ENCODE measurements at regions of chr3 and their contacts with region 1.

Region 1: DNA sequence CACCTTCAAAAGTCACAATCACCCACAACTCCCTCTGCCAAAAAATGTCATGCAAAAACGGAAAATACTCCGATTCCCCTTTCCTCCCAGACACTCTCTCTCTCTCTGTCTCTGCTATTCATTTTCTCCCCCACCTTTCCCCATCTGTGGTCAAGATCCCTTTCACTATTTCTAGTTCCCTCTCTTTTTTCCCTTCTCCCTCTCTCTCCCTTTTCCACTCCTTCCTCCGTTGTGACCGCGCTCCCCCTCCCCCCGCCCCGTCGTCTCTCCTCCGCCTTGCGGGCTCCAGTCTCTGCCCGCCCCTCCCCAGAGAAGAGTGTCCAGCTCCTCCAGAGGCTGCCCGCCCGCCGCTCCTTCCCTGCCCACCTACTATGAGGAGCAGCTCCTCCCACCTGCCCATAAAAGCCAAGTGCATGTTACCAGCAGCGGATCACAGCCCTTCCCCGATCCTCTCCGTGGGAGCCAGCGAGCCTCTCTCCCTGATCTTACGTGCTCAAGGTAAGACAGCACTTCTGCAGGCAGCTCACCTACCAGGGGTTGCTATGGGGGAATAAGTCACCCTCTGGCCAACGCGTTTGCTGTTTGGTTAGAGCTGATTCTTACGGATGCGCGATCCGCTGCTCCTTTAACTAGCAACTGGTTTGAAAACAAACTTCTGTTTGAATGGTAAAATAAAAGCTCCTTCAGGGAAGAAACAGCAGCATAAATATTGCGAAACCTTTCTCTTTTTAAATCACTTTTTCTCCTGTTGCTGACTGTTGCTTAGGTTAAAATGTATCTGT is at the start of gene COL8A1:
- DNase-seq: peak; percentile 76
- ATAC-seq: peak; percentile 63
- H3K4me3 ChIP-seq: peak within 1 kb of the TSS; percentile 72
- H3K27ac ChIP-seq: peak within 1 kb of the TSS; percentile 79
- H3K4me1 ChIP-seq: peaks cover 36% of the 10 kb centered on the region
- H3K27me3 ChIP-seq: no peaks in the 10 kb centered on the region
- CTCF ChIP-seq: no peak
- total RNA-seq, gene COL8A1: 2.4 and 3.8 TPM in 2 replicates

Region 2: DNA sequence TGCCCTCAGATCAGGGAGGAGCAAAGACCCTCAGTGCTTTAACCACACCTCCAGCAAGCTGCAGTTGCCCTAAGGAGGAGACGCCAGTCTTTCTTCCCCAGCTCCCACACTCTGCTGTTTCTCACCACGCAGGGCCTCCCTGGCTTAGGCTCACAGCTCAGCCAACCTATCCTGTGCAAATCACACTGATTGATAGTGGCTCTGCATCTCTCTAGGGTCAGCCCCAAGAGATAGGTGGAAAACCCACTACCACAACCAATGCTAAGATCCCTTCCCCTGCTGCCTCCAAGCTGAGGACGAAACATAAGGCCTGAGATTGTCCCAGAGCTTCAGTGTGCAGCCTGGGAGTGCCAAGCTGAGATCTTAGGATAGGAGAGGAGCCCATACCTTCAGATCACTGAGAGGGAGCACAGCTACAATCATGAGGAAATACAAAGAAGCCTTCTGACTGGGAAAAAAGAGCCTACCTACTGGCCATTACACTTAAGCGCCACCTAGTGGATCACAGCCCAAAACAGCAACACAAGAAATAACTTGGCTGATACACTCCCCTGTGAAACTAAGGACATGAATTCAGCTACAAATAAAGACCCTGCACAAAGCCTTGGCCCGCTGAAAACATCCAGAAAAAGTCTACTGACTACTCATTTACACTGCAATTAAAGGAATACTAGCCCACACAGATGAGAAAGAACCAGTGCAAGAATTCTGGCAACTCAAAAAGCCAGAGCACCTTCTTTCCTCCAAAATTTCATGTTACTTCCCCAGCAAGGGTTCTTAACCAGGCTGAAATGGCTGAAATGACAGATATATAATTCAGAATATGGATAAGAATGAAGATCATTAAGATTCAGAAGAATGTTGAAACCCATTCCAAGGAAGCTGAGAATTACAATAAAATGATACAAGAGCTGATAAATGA is 465.4 kb before region 1 on chr3:
- CTCF ChIA-PET with region 1: no interaction called
- POLR2A ChIA-PET with region 1: no interaction called
- intact Hi-C with region 1: loop called (anchors 10 kb)
- DNase-seq: peak; percentile 84
- ATAC-seq: peak; percentile 79
- H3K4me3 ChIP-seq: no peak overlapping the region
- H3K27ac ChIP-seq: no peak overlapping the region
- H3K4me1 ChIP-seq: no peaks in the 10 kb centered on the region
- H3K27me3 ChIP-seq: no peaks in the 10 kb centered on the region
- CTCF ChIP-seq: peak; percentile 94

Region 3: GRCh38 chr3:99499235-99500158 is 138.9 kb before region 1 on chr3:
- CTCF ChIA-PET with region 1: no interaction called
- POLR2A ChIA-PET with region 1: interaction called, 3 read pairs
- intact Hi-C with region 1: loop called (anchors 2 kb)
- DNase-seq: peak; percentile 77
- ATAC-seq: peak; percentile 81
- H3K4me3 ChIP-seq: no peak overlapping the region
- H3K27ac ChIP-seq: no peak overlapping the region
- H3K4me1 ChIP-seq: peaks cover 18% of the 10 kb centered on the region
- H3K27me3 ChIP-seq: no peaks in the 10 kb centered on the region
- CTCF ChIP-seq: peak; percentile 94

Region 4: GRCh38 chr3:99551520-99551919 is 86.8 kb before region 1 on chr3:
- CTCF ChIA-PET with region 1: no interaction called
- POLR2A ChIA-PET with region 1: no interaction called
- intact Hi-C with region 1: loop called (anchors 2 kb)
- DNase-seq: no peak
- ATAC-seq: peak; percentile 58; the same call in 1 of the 2 replicates
- H3K4me3 ChIP-seq: no peak overlapping the region
- H3K27ac ChIP-seq: no peak overlapping the region
- H3K4me1 ChIP-seq: peaks cover under 1% of the 10 kb centered on the region; the same call in 1 of the 2 replicates
- H3K27me3 ChIP-seq: no peaks in the 10 kb centered on the region
- CTCF ChIP-seq: peak; percentile 61

Region 5: DNA sequence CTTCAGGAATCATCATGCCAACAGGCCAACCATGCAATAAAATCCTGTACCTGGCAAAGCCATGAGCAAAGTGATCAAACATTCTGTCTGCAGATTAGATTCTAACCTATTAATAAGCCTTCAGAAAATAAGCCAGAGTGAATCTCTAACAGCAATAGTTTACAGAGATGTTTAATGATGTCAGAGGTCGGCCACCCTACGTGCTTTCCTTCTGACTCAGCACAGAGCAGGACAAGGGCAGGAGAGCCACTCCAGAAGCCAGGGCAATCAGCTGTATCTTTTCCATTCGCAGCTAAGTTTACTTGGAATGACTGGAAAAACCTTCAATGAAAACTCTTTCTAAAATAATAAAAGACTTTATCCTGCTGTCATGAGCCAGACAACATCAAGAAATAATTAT is 13.2 kb after region 1 on chr3:
- CTCF ChIA-PET with region 1: interaction called, 6 read pairs
- POLR2A ChIA-PET with region 1: interaction called, 16 read pairs
- intact Hi-C with region 1: no loop called
- DNase-seq: peak; percentile 82
- ATAC-seq: peak; percentile 68
- H3K4me3 ChIP-seq: no peak overlapping the region
- H3K27ac ChIP-seq: peak overlapping the region; percentile 21
- H3K4me1 ChIP-seq: peaks cover 48% of the 10 kb centered on the region
- H3K27me3 ChIP-seq: no peaks in the 10 kb centered on the region
- CTCF ChIP-seq: no peak

Region 6: DNA sequence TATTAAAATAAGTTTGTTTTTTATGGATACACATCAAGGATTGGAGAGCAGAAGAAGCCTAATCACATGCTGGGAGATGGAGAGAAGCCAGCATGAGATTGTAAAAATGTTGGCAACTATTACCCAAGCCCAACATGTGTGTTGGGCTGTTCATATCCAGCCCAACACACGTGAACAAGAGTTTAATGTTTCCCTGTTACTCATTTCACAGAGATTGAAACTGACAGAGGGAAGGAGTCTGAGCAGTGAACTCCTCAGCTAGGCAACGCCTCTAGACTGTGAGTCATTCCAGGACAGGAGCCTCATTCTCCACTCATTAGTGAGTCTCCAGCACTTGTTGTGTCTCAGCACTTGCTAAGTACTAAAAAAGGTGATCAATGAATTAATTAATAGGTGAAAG is 136.1 kb after region 1 on chr3:
- CTCF ChIA-PET with region 1: no interaction called
- POLR2A ChIA-PET with region 1: interaction called, 10 read pairs
- intact Hi-C with region 1: no loop called
- DNase-seq: peak; percentile 72
- ATAC-seq: peak; percentile 86
- H3K4me3 ChIP-seq: no peak overlapping the region
- H3K27ac ChIP-seq: no peak overlapping the region
- H3K4me1 ChIP-seq: peaks cover 24% of the 10 kb centered on the region
- H3K27me3 ChIP-seq: no peaks in the 10 kb centered on the region
- CTCF ChIP-seq: no peak

Region 7: DNA sequence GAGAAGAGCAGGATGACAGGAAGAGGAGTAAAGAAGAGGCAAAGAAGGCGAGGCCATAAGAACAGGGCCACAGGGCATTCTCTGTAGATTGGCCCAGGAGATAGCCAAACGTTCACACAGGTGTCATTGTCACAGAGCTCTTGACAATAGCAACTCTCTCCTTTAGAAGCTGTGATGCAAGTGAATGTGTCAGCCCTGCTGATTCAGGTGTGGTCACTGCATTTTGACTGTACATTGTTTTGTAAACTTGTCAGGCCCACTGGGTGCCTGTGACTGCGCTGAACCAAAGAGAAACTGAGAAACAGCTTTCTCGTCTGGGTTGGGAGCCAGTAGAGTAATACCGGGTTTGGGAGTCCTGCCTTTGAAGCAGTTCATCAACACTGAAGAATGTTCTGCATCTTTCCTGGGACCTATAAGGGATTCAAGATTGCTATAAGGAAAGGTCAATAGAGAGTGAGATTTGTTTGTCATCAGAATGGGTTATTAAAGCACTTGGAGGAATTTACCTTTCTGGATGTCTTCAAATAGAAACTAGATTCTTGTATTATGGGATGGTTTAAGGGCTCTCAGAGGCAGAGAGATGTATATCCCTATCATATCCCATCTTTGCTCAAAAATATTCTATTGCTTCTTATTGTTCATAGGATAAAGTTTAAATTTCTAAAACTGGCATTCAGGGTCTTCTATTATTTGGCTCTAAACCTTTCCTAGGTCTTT is 899.4 kb after region 1 on chr3:
- CTCF ChIA-PET with region 1: no interaction called
- POLR2A ChIA-PET with region 1: interaction called, 14 read pairs
- intact Hi-C with region 1: no loop called
- DNase-seq: peak; percentile 72
- ATAC-seq: no peak
- H3K4me3 ChIP-seq: no peak overlapping the region
- H3K27ac ChIP-seq: peak overlapping the region; percentile 76
- H3K4me1 ChIP-seq: peaks cover 49% of the 10 kb centered on the region
- H3K27me3 ChIP-seq: no peaks in the 10 kb centered on the region
- CTCF ChIP-seq: no peak